Endothelial cell of umbilical vein (primary cell): ENCODE measurements at regions of chr2 and their contacts with region 1.

Region 1: DNA sequence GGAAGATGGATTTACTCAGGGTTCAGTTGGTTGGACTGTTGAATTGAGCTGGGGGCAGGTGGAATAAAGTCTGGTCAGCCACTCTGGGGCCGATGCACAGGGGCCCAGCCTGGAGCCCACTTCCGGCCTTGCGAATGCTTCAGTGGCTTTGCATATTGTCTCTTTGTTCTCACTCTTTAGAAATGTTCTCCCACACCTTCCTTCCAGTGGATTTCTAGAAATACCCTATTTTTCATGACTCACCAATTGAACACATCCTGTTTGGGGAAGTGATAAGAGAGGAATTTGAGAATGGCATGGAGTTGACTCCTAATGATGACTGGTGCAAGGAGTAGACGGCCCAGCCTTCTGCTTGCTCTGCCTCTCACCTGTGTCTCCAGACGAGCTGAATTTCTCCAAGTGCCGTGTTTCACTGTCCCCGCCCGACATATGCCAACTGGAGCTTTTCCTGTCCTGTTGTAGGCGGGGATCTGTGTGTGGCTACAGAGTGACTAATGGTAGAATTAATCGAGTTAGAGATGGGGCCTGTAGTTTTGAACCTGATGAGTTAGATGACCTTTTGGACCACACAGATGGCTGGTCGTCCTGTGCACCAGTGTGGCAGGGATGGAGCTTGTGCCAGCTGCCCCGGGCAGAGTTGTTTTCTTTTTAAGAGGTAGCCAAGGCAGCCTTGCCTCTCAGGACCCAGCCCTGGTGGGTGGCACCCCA is 28.2 kb downstream of the ASAP2 start:
- DNase-seq: peak; percentile 95
- H3K4me3 ChIP-seq: peak overlapping the region in 1 of 3 experiments; percentile 1
- H3K27ac ChIP-seq: peak overlapping the region; percentile 98
- H3K4me1 ChIP-seq: peaks cover 87% of the 10 kb centered on the region
- H3K27me3 ChIP-seq: no peaks in the 10 kb centered on the region
- CTCF ChIP-seq: no peak
- POLR2A ChIP-seq: peak; percentile 71

Region 2: GRCh38 chr2:9211496-9211895 is 23.3 kb before region 1 on chr2:
- CTCF ChIA-PET with region 1: interaction called, 59 read pairs
- POLR2A ChIA-PET with region 1: interaction called, 6 read pairs
- dilution Hi-C with region 1: no loop called
- intact Hi-C with region 1: loop called (anchors 1 kb)
- DNase-seq: peak; percentile 44
- H3K4me3 ChIP-seq: no peak overlapping the region
- H3K27ac ChIP-seq: peak overlapping the region; percentile 21
- H3K4me1 ChIP-seq: peaks cover 43% of the 10 kb centered on the region
- H3K27me3 ChIP-seq: no peaks in the 10 kb centered on the region
- CTCF ChIP-seq: no peak
- POLR2A ChIP-seq: no peak

Region 3: GRCh38 chr2:9222239-9222892 is 12.5 kb before region 1 on chr2:
- CTCF ChIA-PET with region 1: interaction called, 6 read pairs
- POLR2A ChIA-PET with region 1: no interaction called
- dilution Hi-C with region 1: no loop called
- intact Hi-C with region 1: loop called (anchors 1 kb)
- DNase-seq: no peak
- H3K4me3 ChIP-seq: no peak overlapping the region
- H3K27ac ChIP-seq: no peak overlapping the region
- H3K4me1 ChIP-seq: peaks cover 60% of the 10 kb centered on the region
- H3K27me3 ChIP-seq: no peaks in the 10 kb centered on the region
- CTCF ChIP-seq: no peak
- POLR2A ChIP-seq: no peak

Region 4: GRCh38 chr2:9251154-9252001 is 16.5 kb after region 1 on chr2:
- CTCF ChIA-PET with region 1: interaction called, 65 read pairs
- POLR2A ChIA-PET with region 1: interaction called, 6 read pairs
- dilution Hi-C with region 1: no loop called
- intact Hi-C with region 1: loop called (anchors 1 kb)
- DNase-seq: peak; percentile 81
- H3K4me3 ChIP-seq: no peak overlapping the region
- H3K27ac ChIP-seq: peak overlapping the region; percentile 94
- H3K4me1 ChIP-seq: peaks cover 61% of the 10 kb centered on the region
- H3K27me3 ChIP-seq: no peaks in the 10 kb centered on the region
- CTCF ChIP-seq: no peak
- POLR2A ChIP-seq: peak; percentile 10

Region 5: GRCh38 chr2:9258953-9259399 is 24.1 kb after region 1 on chr2:
- CTCF ChIA-PET with region 1: interaction called, 5 read pairs
- POLR2A ChIA-PET with region 1: interaction called, 5 read pairs
- dilution Hi-C with region 1: no loop called
- intact Hi-C with region 1: loop called (anchors 1 kb)
- DNase-seq: peak; percentile 68
- H3K4me3 ChIP-seq: no peak overlapping the region
- H3K27ac ChIP-seq: peak overlapping the region; percentile 42
- H3K4me1 ChIP-seq: peaks cover 81% of the 10 kb centered on the region
- H3K27me3 ChIP-seq: no peaks in the 10 kb centered on the region
- CTCF ChIP-seq: no peak
- POLR2A ChIP-seq: no peak

Region 6: GRCh38 chr2:9287400-9288043 is 52.7 kb after region 1 on chr2:
- CTCF ChIA-PET with region 1: interaction called, 4 read pairs
- POLR2A ChIA-PET with region 1: no interaction called
- dilution Hi-C with region 1: no loop called
- intact Hi-C with region 1: loop called (anchors 1 kb)
- DNase-seq: peak; percentile 93
- H3K4me3 ChIP-seq: no peak overlapping the region
- H3K27ac ChIP-seq: peak overlapping the region; percentile 86
- H3K4me1 ChIP-seq: peaks cover 39% of the 10 kb centered on the region
- H3K27me3 ChIP-seq: no peaks in the 10 kb centered on the region
- CTCF ChIP-seq: peak in 1 of 2 donors; percentile 33
- POLR2A ChIP-seq: peak; percentile 76

Region 7: GRCh38 chr2:9423100-9423921 is 188.5 kb after region 1 on chr2 and contains the starts of genes CPSF3 and ITGB1BP1:
- CTCF ChIA-PET with region 1: no interaction called
- POLR2A ChIA-PET with region 1: no interaction called
- dilution Hi-C with region 1: no loop called
- intact Hi-C with region 1: loop called (anchors 5 kb)
- DNase-seq: peak; percentile 96
- H3K4me3 ChIP-seq: peak within 1 kb of the TSS; percentile 52 to 98 (median 75)
- H3K27ac ChIP-seq: peak within 1 kb of the TSS; percentile 62
- H3K4me1 ChIP-seq: peaks cover 16% of the 10 kb centered on the region
- H3K27me3 ChIP-seq: no peaks in the 10 kb centered on the region
- CTCF ChIP-seq: no peak
- POLR2A ChIP-seq: peak; percentile 76
- total RNA-seq, gene CPSF3: 35.6 and 37.1 TPM in 2 replicates
- total RNA-seq, gene ITGB1BP1: 95.5 and 170 TPM in 2 replicates